ENCODE measurements at regions of chr7 and their contacts with region 1.

Region 1: DNA sequence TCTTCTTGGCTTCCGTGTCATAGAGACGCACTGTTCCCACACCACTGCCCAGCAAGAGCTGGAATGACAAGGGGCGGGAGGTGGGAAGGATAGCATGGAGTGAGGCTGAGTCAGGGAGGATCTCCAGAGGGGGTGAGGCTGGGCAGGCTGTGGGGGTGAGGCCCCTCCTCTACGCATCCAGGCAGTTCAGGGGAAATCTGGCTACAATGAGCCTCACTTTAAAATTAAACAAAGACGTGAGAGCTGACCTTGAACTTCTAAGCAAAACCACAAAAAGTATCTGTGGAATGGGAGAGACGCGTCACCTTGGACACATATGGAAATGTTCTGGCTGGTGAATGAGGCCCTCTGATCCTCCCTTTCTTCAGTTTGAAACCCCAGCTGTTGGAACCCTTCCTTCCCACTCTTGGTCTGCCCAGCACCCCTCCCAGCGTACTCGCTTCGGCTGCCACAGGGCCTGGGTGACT is 17.7 kb downstream of the WDR91 start:
- DNase-seq: peak; percentile 87
- H3K4me3 ChIP-seq: peak overlapping the region in 1 of 3 experiments; percentile 28
- H3K27ac ChIP-seq: peak overlapping the region; percentile 68
- H3K4me1 ChIP-seq: peaks cover 44% of the 10 kb centered on the region
- H3K27me3 ChIP-seq: no peaks in the 10 kb centered on the region
- CTCF ChIP-seq: no peak

Region 2: GRCh38 chr7:135211179-135211945 is 17.7 kb after region 1 on chr7 and contains the start of gene WDR91:
- CTCF ChIA-PET with region 1: interaction called, 3 read pairs
- dilution Hi-C with region 1: no loop called
- in situ Hi-C with region 1: no loop called
- intact Hi-C with region 1: loop called (anchors 2 kb)
- DNase-seq: peak; percentile 93
- H3K4me3 ChIP-seq: peak within 1 kb of the TSS; percentile 80 to 87 (median 81)
- H3K27ac ChIP-seq: peak within 1 kb of the TSS; percentile 82
- H3K4me1 ChIP-seq: peaks cover 36% of the 10 kb centered on the region
- H3K27me3 ChIP-seq: no peaks in the 10 kb centered on the region
- CTCF ChIP-seq: peak in 1 of 2 donors; percentile 6
- total RNA-seq, gene WDR91: 31.5 to 33.8 TPM

Region 3: DNA sequence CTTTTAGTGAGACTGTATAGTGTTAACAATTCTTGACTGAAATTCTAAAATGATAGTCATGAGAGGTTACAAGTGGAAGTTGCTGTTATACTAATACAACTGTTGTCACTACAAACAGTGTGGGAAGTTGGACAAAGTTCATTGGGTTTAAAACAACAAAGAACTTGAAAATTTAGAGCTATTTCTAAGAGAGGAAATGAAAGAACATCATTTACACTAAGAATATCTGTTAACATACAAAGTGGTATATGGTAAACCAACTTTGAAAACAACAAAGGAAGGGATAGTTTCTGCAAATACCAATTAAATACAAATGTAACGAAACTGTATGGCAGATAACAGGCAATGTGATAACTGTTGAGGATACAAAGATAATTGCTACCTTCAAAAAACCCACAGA is 772.0 kb after region 1 on chr7:
- CTCF ChIA-PET with region 1: no interaction called
- dilution Hi-C with region 1: no loop called
- in situ Hi-C with region 1: no loop called
- intact Hi-C with region 1: no loop called
- DNase-seq: no peak
- H3K4me3 ChIP-seq: no peak overlapping the region
- H3K27ac ChIP-seq: no peak overlapping the region
- H3K4me1 ChIP-seq: no peaks in the 10 kb centered on the region
- H3K27me3 ChIP-seq: no peaks in the 10 kb centered on the region
- CTCF ChIP-seq: no peak